ENCODE measurements at regions of chr10 and their contacts with region 1.

Region 1: GRCh38 chr10:23525406-23525805 is 86.5 kb downstream of the OTUD1 start:
- DNase-seq: no peak
- H3K4me3 Mint-ChIP-seq: no peak overlapping the region
- H3K27ac Mint-ChIP-seq: no peak overlapping the region
- H3K4me1 Mint-ChIP-seq: no peaks in the 10 kb centered on the region
- H3K27me3 Mint-ChIP-seq: peaks cover 6% of the 10 kb centered on the region

Region 2: GRCh38 chr10:23325132-23325531 is 200.3 kb before region 1 on chr10:
- CTCF ChIA-PET with region 1: interaction called, 15 read pairs
- POLR2A ChIA-PET with region 1: no interaction called
- DNase-seq: no peak
- H3K4me3 Mint-ChIP-seq: no peak overlapping the region
- H3K27ac Mint-ChIP-seq: no peak overlapping the region
- H3K4me1 Mint-ChIP-seq: peaks cover 2% of the 10 kb centered on the region
- H3K27me3 Mint-ChIP-seq: peaks cover 5% of the 10 kb centered on the region

Region 3: GRCh38 chr10:23469596-23470237 is 55.7 kb before region 1 on chr10:
- CTCF ChIA-PET with region 1: no interaction called
- POLR2A ChIA-PET with region 1: no interaction called
- DNase-seq: no peak
- H3K4me3 Mint-ChIP-seq: no peak overlapping the region
- H3K27ac Mint-ChIP-seq: no peak overlapping the region
- H3K4me1 Mint-ChIP-seq: no peaks in the 10 kb centered on the region
- H3K27me3 Mint-ChIP-seq: peaks cover 16% of the 10 kb centered on the region

Region 4: GRCh38 chr10:23540401-23541030 is 15.1 kb after region 1 on chr10:
- CTCF ChIA-PET with region 1: interaction called, 10 read pairs
- POLR2A ChIA-PET with region 1: no interaction called
- DNase-seq: no peak
- H3K4me3 Mint-ChIP-seq: no peak overlapping the region
- H3K27ac Mint-ChIP-seq: no peak overlapping the region
- H3K4me1 Mint-ChIP-seq: peaks cover 5% of the 10 kb centered on the region
- H3K27me3 Mint-ChIP-seq: peaks cover 13% of the 10 kb centered on the region

Measured in activated CD4-positive, alpha-beta memory T cell treated with anti-CD3 and anti-CD28 coated beads, Interleukin-2, amount 10 ng/mL, durations not matched to agents 7 days and 5 days (primary cell).